ENCODE measurements at regions of chr4 and their contacts with region 1.

Region 1: GRCh38 chr4:118969359-118969758 is 80.7 kb downstream of the SYNPO2 start:
- DNase-seq: peak; percentile 34 to 51 (median 41)
- H3K4me3 ChIP-seq: no peak overlapping the region
- H3K27ac ChIP-seq: no peak overlapping the region
- H3K4me1 ChIP-seq: peaks cover 8 to 20% (median 11%) of the 10 kb centered on the region in 4 experiments
- H3K27me3 ChIP-seq: no peaks in the 10 kb centered on the region

Region 2: DNA sequence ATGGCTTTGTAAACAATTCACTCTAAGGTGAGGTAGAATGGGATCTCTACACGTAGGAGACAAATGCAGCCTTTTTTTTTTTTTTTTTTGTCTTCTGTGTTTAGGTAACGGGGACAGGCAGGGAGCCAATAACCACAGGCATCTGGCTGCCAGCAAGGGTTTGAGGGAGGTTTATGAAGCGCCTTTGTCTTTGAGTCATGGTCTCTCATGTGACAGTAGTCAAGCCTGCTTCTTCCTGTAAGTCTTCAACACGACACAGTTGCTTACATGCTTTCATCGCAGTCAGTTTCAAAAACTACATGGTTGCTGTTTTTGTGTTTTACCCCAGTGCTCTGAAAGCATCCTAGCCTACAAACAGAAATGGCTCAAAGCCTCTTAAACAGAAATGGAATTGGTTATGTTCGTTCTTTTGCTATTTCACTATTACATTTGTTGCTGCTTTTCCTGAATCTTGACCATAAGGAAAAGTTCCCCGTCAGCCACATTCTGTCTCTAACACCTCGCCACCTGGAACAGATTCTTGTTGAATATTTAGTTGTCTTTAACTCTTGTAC is 412.0 kb before region 1 on chr4:
- CTCF ChIA-PET with region 1: no interaction called
- POLR2A ChIA-PET with region 1: no interaction called
- DNase-seq: peak; percentile 11 to 58 (median 42)
- H3K4me3 ChIP-seq: no peak overlapping the region
- H3K27ac ChIP-seq: no peak overlapping the region
- H3K4me1 ChIP-seq: peaks cover 0 to 2% (median 0%) of the 10 kb centered on the region in 4 experiments
- H3K27me3 ChIP-seq: no peaks in the 10 kb centered on the region

Region 3: GRCh38 chr4:118772081-118772766 is 197.1 kb before region 1 on chr4:
- CTCF ChIA-PET with region 1: interaction called, 10 read pairs
- POLR2A ChIA-PET with region 1: no interaction called
- DNase-seq: peak; percentile 60 to 80 (median 73)
- H3K4me3 ChIP-seq: no peak overlapping the region
- H3K27ac ChIP-seq: no peak overlapping the region
- H3K4me1 ChIP-seq: no peaks in the 10 kb centered on the region
- H3K27me3 ChIP-seq: no peaks in the 10 kb centered on the region

Region 4: DNA sequence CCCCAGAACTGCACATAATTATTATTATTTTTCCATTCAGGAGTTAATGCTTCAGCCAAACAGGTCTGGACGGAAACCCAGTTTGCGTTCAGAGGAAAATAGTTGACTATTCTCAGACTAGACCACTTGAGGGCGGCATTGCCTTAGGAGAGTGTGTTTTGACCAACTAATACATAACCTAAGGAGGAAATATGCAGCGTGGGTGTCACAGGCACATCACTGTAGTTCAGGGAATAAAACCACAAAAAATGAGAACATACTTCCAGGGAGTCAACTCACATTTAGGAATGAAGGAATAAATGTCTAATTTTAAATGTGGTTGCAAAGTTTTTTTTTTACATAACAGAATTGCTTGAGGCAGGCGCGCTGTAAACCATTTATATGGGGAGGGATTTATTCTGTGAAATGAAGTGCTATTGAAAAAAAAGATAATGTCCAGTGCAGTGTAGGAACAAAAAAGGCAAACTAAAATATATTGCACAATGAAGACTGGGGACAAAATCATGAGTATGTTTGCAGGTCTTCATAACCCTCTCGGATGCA is 12.6 kb after region 1 on chr4:
- CTCF ChIA-PET with region 1: interaction called, 10 read pairs
- POLR2A ChIA-PET with region 1: no interaction called
- DNase-seq: peak; percentile 55 to 80 (median 71)
- H3K4me3 ChIP-seq: no peak overlapping the region
- H3K27ac ChIP-seq: no peak overlapping the region
- H3K4me1 ChIP-seq: no peaks in the 10 kb centered on the region
- H3K27me3 ChIP-seq: no peaks in the 10 kb centered on the region

Measured in common myeloid progenitor, CD34-positive (primary cell).